Gastrocnemius medialis (tissue), 4 donors: ENCODE measurements at regions of chr4 and their contacts with region 1.

Region 1: GRCh38 chr4:43089730-43090129 is 197.2 kb downstream of the GRXCR1 start:
- DNase-seq: no peak
- ATAC-seq: no peak
- H3K4me3 ChIP-seq: no peak overlapping the region
- H3K27ac ChIP-seq: no peak overlapping the region
- H3K4me1 ChIP-seq: no peaks in the 10 kb centered on the region
- H3K27me3 ChIP-seq: no peaks in the 10 kb centered on the region
- CTCF ChIP-seq: no peak
- POLR2A ChIP-seq: no peak

Region 2: GRCh38 chr4:42453612-42454011 is 636.1 kb before region 1 on chr4:
- in situ Hi-C with region 1: no loop called
- intact Hi-C with region 1: loop called (anchors 10 kb)
- DNase-seq: no peak
- ATAC-seq: no peak
- H3K4me3 ChIP-seq: no peak overlapping the region
- H3K27ac ChIP-seq: no peak overlapping the region
- H3K4me1 ChIP-seq: peaks cover 7 to 8% of the 10 kb centered on the region in 2 donors
- H3K27me3 ChIP-seq: no peaks in the 10 kb centered on the region
- CTCF ChIP-seq: no peak
- POLR2A ChIP-seq: no peak